ENCODE measurements at regions of chr11 and their contacts with region 1.

Region 1: GRCh38 chr11:57460022-57460757 is at the start of gene RTN4RL2:
- DNase-seq: peak in 5 of 10 donors; percentile 17 to 30 (median 22)
- ATAC-seq: peak; percentile 51 to 61
- H3K4me3 Mint-ChIP-seq: peak within 1 kb of the TSS; percentile 69 to 92 (median 84)
- H3K27ac Mint-ChIP-seq: peak within 1 kb of the TSS in 5 of 10 donors; percentile 9 to 83 (median 57)
- H3K4me1 Mint-ChIP-seq: peaks cover 18 to 36% (median 34%) of the 10 kb centered on the region in 4 donors
- H3K27me3 Mint-ChIP-seq: peaks cover 19 to 35% (median 23%) of the 10 kb centered on the region in 5 donors
- polyA plus RNA-seq, gene RTN4RL2: 0.09 to 0.21 TPM in 2 of 3 donors, not detected in the other

Region 2: DNA sequence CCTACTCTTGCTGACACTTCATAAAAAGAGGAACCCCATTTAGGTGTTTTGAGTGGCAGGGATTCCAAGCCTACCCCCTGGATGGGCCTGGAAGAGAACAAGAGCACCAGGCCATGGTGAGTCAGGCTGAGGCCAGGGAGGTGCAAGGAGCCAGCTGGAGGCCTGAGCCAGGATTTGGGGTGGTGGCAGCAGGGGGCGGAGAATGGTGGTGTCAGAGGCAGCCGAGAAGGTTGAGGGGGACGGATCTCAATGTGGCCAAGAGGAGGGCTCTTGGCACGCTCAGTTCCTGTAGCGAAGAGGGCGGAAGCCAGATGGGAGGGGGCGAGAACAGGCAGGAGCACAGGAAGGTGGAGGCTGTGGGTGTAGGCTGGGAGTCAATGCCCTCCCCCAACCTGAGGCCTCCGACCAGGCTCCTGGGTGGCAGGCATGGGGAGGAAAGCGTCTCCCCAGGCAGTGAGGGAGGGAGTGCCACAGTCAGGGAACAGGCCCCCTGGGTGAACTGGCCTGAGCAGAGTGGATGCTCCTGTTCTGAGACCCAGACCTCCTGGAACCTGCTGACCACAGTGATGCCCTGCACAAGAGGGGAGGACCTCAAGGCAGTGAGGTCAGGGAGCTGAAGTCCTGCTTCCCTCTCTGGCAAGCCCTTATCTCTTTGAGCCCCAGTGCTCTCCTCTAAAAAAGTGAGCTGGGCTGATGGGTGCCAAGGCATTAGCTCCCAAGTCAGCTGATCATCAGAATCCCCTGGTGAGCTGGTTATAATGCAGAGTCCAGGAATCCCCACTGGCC is 14.0 kb after region 1 on chr11:
- POLR2A ChIA-PET with region 1: interaction called, 16 read pairs
- DNase-seq: peak in 8 of 10 donors; percentile 26 to 82 (median 46)
- ATAC-seq: peak; percentile 59 to 81
- H3K4me3 Mint-ChIP-seq: peak overlapping the region; percentile 58 to 86 (median 78)
- H3K27ac Mint-ChIP-seq: peak overlapping the region; percentile 61 to 86 (median 79)
- H3K4me1 Mint-ChIP-seq: peaks cover 16 to 45% (median 36%) of the 10 kb centered on the region in 4 donors
- H3K27me3 Mint-ChIP-seq: peaks cover 0 to 1% (median 0%) of the 10 kb centered on the region in 5 donors

Measured in naive thymus-derived CD8-positive, alpha-beta T cell (primary cell).